Mammary epithelial cell (primary cell): ENCODE measurements at regions of chr1 and their contacts with region 1.

Region 1: GRCh38 chr1:211514030-211514754 is 22.2 kb upstream of the RD3 start:
- DNase-seq: peak; percentile 81
- H3K4me3 ChIP-seq: no peak overlapping the region
- H3K27ac ChIP-seq: no peak overlapping the region
- H3K4me1 ChIP-seq: peaks cover 45% of the 10 kb centered on the region
- H3K27me3 ChIP-seq: no peaks in the 10 kb centered on the region
- CTCF ChIP-seq: peak; percentile 61 to 88

Region 2: GRCh38 chr1:210407207-210407886 is 1106.8 kb before region 1 on chr1:
- CTCF ChIA-PET with region 1: no interaction called
- dilution Hi-C with region 1: no loop called
- in situ Hi-C with region 1: no loop called
- intact Hi-C with region 1: loop called (anchors 2 kb)
- DNase-seq: peak; percentile 50
- H3K4me3 ChIP-seq: no peak overlapping the region
- H3K27ac ChIP-seq: no peak overlapping the region
- H3K4me1 ChIP-seq: peaks cover 21% of the 10 kb centered on the region
- H3K27me3 ChIP-seq: no peaks in the 10 kb centered on the region
- CTCF ChIP-seq: peak; percentile 96 to 99

Region 3: DNA sequence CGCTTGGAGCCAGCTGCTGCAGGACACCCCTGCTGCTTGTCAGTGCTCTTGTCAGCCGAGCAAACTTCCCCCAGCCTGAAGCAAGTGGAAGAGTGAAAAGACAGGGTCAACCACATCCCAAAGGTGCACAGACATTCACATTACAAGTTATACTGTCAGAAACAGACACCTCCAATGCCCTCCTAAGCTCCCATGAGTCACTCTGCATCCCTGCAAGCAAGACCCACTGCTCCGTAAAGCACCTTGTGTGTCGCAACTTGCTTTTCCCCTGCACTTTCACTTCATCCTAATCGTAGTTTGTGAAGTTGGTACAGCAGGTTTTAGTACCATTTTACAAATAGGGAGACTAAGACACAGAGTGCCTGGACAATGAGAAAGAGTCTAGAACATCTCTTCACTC is 431.4 kb before region 1 on chr1:
- CTCF ChIA-PET with region 1: no interaction called
- dilution Hi-C with region 1: no loop called
- in situ Hi-C with region 1: no loop called
- intact Hi-C with region 1: no loop called
- DNase-seq: no peak
- H3K4me3 ChIP-seq: no peak overlapping the region
- H3K27ac ChIP-seq: no peak overlapping the region
- H3K4me1 ChIP-seq: no peaks in the 10 kb centered on the region
- H3K27me3 ChIP-seq: peaks cover 2% of the 10 kb centered on the region
- CTCF ChIP-seq: no peak

Region 4: DNA sequence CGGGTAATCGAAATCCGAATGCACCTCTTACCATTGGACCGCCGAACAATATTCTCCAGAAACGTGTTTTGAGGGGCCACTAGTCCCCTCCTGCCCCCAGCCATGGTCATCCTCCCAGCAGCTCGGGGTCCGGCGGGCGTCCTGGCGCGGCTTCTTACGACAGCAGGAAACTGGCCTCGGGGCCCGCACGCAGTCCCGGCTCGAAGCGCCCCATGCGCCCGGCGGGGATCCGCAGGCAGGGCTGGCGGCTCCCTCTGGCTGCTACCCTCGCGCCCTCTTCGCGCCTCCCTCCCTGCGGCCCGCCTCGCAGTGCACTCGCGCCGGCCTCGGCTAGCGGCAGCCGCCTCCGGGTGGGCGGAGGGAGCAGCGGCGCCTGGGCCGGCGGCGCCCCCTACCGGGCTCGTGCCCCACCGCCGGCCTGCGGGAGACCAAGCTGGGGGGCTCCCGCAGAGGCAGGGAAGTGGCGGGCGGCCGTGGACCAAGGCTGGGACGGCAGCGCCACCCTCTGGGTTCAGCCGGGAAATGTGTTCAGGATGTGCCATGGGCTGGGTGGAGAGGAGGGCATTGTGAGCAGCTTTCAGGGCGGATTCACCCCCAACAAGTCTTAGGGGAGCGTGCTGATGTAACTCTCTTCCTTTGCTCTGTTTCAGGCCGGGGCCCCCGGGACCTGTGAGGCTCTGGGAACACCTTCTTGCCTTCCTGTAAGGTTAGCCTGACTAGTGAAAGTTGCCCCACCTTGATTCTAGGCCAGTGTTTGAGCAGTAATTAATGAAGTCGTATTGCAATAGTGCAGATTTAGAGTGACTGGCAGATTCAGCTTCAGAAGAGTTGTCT is 380.1 kb before region 1 on chr1 and contains the start of gene KCNH1:
- CTCF ChIA-PET with region 1: interaction called, 5 read pairs
- dilution Hi-C with region 1: no loop called
- in situ Hi-C with region 1: no loop called
- intact Hi-C with region 1: loop called (anchors 2 kb)
- DNase-seq: peak; percentile 59
- H3K4me3 ChIP-seq: peak within 1 kb of the TSS; percentile 34 to 41 (median 37)
- H3K27ac ChIP-seq: no peak within 1 kb of the TSS
- H3K4me1 ChIP-seq: peaks cover 9% of the 10 kb centered on the region
- H3K27me3 ChIP-seq: peaks cover 16% of the 10 kb centered on the region
- CTCF ChIP-seq: peak; percentile 53 to 70
- total RNA-seq, gene KCNH1: not detected

Region 5: GRCh38 chr1:211323156-211324063 is 190.8 kb before region 1 on chr1:
- CTCF ChIA-PET with region 1: interaction called, 9 read pairs
- dilution Hi-C with region 1: no loop called
- in situ Hi-C with region 1: no loop called
- intact Hi-C with region 1: loop called (anchors 1 kb)
- DNase-seq: peak; percentile 45
- H3K4me3 ChIP-seq: no peak overlapping the region
- H3K27ac ChIP-seq: no peak overlapping the region
- H3K4me1 ChIP-seq: peaks cover 5% of the 10 kb centered on the region
- H3K27me3 ChIP-seq: no peaks in the 10 kb centered on the region
- CTCF ChIP-seq: peak; percentile 93 to 97

Region 6: GRCh38 chr1:211476200-211476849 is 37.9 kb before region 1 on chr1:
- CTCF ChIA-PET with region 1: no interaction called
- dilution Hi-C with region 1: loop called (anchors 5 kb)
- in situ Hi-C with region 1: no loop called
- intact Hi-C with region 1: loop called (anchors 1 kb)
- DNase-seq: peak; percentile 36
- H3K4me3 ChIP-seq: no peak overlapping the region
- H3K27ac ChIP-seq: no peak overlapping the region
- H3K4me1 ChIP-seq: no peaks in the 10 kb centered on the region
- H3K27me3 ChIP-seq: peaks cover 4% of the 10 kb centered on the region
- CTCF ChIP-seq: peak; percentile 90 to 96

Region 7: DNA sequence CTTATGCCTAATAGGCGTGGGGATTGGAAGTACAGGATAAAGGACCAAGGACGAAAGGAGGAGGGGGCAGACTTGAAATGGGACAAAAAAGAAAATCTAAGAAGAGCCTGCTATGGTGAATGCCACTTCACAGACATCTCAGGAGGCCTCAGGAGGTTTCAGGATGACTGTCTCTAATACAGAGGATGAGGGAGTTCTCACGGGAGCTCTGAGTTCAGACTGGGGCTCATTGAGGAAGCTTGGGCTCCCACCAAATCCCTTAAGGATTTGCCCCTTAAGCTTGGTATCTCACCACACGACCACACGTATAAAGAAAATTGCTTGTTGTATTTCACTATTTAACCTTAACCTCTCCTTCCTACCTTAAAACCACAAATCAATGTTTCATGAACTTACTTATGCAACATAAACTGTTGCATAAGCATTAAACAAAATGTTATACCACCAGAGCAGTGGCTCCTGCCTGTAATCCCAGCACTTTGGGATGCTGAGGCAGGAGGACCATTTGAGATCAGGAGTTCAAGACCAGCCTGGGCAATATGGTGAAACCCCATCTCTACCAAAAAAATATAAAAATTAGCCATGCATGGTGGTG is 52.3 kb after region 1 on chr1:
- CTCF ChIA-PET with region 1: no interaction called
- dilution Hi-C with region 1: no loop called
- in situ Hi-C with region 1: no loop called
- intact Hi-C with region 1: no loop called
- DNase-seq: no peak
- H3K4me3 ChIP-seq: no peak overlapping the region
- H3K27ac ChIP-seq: no peak overlapping the region
- H3K4me1 ChIP-seq: no peaks in the 10 kb centered on the region
- H3K27me3 ChIP-seq: no peaks in the 10 kb centered on the region
- CTCF ChIP-seq: no peak

Region 8: DNA sequence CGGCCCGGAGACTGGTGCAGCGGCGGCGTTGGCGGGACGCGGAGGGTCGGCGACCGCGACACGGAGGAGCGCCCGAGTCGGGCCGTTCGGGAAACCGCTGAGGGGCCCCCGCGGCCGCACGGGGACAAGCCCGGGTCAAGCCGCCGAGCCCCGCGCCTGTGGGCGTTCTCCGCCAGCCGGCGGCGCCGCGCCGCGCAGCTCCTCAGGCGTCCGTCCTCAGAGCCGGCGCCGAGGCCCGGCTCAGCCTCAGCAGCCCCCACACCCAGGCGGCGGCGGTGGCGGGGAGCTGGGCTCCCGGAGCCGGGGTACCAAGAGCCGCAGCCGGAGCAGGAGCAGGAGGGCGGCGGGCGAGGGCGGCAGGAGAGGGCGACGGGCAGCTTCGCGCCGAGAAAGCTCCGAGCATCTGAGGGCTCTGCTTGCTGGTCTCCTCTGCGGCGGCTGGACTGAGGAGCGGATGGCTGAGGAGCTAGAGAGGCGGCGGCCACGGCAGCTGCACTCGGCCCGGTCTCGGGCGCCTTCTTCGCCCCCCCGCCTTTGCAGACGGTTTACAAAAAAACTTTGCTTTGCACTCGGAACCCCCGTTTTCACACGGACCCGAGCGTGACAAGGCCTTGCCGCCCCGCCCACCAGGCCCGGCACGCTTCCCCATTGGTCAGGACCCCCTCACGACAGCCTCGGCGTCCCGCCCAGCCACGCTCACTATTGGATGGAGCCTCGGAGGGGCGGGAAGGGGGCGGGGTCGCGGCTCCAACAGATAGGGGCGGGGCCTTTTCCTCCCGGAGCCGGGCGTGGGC is 64.6 kb after region 1 on chr1 and contains the start of gene SLC30A1:
- CTCF ChIA-PET with region 1: no interaction called
- dilution Hi-C with region 1: no loop called
- in situ Hi-C with region 1: no loop called
- intact Hi-C with region 1: loop called (anchors 1 kb)
- DNase-seq: peak; percentile 98
- H3K4me3 ChIP-seq: peak within 1 kb of the TSS; percentile 85 to 96 (median 96)
- H3K27ac ChIP-seq: peak within 1 kb of the TSS; percentile 59
- H3K4me1 ChIP-seq: peaks cover 23% of the 10 kb centered on the region
- H3K27me3 ChIP-seq: no peaks in the 10 kb centered on the region
- CTCF ChIP-seq: no peak
- total RNA-seq, gene SLC30A1: 30.2 to 63.0 TPM

Region 9: DNA sequence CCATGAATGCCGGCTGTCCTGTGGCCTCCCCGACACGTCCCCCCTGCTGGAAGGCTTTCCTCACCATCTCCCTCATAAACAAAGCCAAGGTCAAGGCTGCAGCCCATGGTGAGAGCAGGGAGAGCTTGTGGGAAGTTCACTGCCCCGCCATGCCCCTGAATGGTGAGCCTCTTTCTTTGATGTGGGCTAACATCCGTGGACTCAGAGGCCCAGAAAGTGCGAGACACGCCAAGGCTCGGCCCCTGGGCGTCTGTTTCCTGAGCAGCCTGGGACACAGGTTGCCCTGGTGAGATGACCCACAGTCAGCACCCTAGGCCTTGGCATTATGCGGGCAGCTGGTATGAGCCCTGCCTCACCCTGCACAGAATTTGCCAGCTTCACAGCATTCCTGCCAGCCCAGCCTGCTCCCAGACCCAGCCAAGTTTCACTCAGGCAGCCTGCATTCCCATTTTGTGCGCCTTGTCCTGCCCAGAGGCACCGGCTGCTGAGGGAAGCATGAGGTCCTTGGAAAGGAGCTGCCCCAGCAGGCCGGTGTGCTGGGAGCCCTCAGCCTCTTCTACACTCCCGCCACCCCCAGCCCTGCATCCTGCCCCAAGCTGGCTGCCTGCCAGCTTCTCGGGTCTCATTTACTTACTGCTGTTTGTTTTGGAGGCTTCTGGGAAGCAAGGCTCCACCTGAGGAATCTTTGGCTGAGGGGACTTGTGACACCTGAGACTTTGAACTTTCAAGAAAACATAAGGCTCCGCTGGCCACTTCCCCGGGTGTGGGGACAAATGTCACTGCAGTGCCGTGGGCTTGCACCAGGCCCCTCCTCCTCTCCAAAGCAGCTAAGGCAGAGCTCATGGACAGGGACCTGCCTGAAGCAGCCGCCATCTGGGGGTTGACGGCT is 129.4 kb after region 1 on chr1:
- CTCF ChIA-PET with region 1: no interaction called
- dilution Hi-C with region 1: no loop called
- in situ Hi-C with region 1: no loop called
- intact Hi-C with region 1: no loop called
- DNase-seq: peak; percentile 62
- H3K4me3 ChIP-seq: no peak overlapping the region
- H3K27ac ChIP-seq: peak overlapping the region; percentile 34
- H3K4me1 ChIP-seq: peaks cover 30% of the 10 kb centered on the region
- H3K27me3 ChIP-seq: no peaks in the 10 kb centered on the region
- CTCF ChIP-seq: no peak

Region 10: GRCh38 chr1:211654838-211655787 is 140.9 kb after region 1 on chr1:
- CTCF ChIA-PET with region 1: no interaction called
- dilution Hi-C with region 1: no loop called
- in situ Hi-C with region 1: loop called in 1 of 2 experiments (anchors 10 kb)
- intact Hi-C with region 1: loop called (anchors 1 kb)
- DNase-seq: peak; percentile 68
- H3K4me3 ChIP-seq: no peak overlapping the region
- H3K27ac ChIP-seq: no peak overlapping the region
- H3K4me1 ChIP-seq: peaks cover 13% of the 10 kb centered on the region
- H3K27me3 ChIP-seq: no peaks in the 10 kb centered on the region
- CTCF ChIP-seq: peak; percentile 86 to 97